Esophagus squamous epithelium (tissue), 5 donors: ENCODE measurements at regions of chr20 and their contacts with region 1.

Region 1: GRCh38 chr20:48657475-48658470 is 170.0 kb downstream of the PREX1 start:
- DNase-seq: no peak
- H3K4me3 ChIP-seq: no peak overlapping the region
- H3K27ac ChIP-seq: no peak overlapping the region
- H3K4me1 ChIP-seq: peaks cover 0 to 24% (median 5%) of the 10 kb centered on the region in 3 donors
- H3K27me3 ChIP-seq: peaks cover 0 to 11% (median 0%) of the 10 kb centered on the region in 4 donors
- CTCF ChIP-seq: peak; percentile 86 to 95 (median 94)
- POLR2A ChIP-seq: no peak

Region 2: GRCh38 chr20:48787861-48788375 is 130.1 kb after region 1 on chr20:
- intact Hi-C with region 1: no loop called
- DNase-seq: no peak
- H3K4me3 ChIP-seq: no peak overlapping the region
- H3K27ac ChIP-seq: peak overlapping the region in 3 of 4 donors; percentile 40 to 76 (median 50)
- H3K4me1 ChIP-seq: peaks cover 4 to 57% (median 12%) of the 10 kb centered on the region in 3 donors
- H3K27me3 ChIP-seq: peaks cover 0 to 51% (median 0%) of the 10 kb centered on the region in 4 donors
- CTCF ChIP-seq: no peak
- POLR2A ChIP-seq: no peak

Region 3: DNA sequence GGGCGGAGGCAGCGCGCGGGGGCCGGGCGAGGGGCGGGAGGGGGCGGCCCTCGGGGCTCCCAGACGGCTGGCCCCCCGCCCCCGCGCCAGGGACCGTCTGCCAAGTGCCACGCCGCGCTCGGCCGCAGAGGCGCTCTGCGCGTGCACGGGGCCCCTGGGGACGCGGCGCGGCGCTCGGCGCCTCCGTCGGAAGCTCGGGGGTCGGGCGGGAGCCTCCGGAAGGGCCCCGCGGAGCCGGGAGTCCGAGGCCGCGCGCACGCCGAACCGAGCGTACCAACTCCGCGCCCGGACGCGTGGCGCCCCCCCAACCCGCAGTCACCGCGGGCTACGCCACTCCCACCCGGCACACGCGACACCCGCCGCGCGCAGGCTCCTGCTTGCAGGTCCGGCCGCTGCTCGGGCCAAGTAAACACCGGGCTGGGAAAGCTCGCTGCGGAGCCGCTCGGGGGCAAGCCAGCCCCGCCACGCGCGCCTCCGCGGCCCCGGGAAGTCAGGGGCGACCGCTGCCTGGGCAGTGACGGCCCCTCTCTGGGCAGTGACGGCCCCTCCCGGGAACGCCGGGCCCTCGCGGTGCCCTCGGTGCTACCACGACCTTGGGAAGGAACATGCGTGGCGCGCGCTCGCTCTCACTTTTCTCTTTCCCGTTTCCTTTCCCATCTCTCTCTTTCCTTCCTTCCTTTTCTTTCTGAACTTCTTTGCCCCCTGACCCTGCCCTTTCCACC is 170.4 kb after region 1 on chr20:
- intact Hi-C with region 1: no loop called
- DNase-seq: no peak
- H3K4me3 ChIP-seq: peak overlapping the region; percentile 33 to 76 (median 60)
- H3K27ac ChIP-seq: peak overlapping the region; percentile 38 to 85 (median 64)
- H3K4me1 ChIP-seq: peaks cover 22 to 76% (median 23%) of the 10 kb centered on the region in 3 donors
- H3K27me3 ChIP-seq: peaks cover 0 to 61% (median 6%) of the 10 kb centered on the region in 4 donors
- CTCF ChIP-seq: peak in 4 of 6 experiments; percentile 14 to 42 (median 38)
- POLR2A ChIP-seq: peak in 2 of 4 donors; percentile 8 to 51

Region 4: GRCh38 chr20:48904365-48905296 is 246.9 kb after region 1 on chr20:
- intact Hi-C with region 1: loop called (anchors 2 kb)
- DNase-seq: no peak
- H3K4me3 ChIP-seq: no peak overlapping the region
- H3K27ac ChIP-seq: no peak overlapping the region
- H3K4me1 ChIP-seq: peaks cover 0 to 11% (median 0%) of the 10 kb centered on the region in 3 donors
- H3K27me3 ChIP-seq: peaks cover 0 to 27% (median 0%) of the 10 kb centered on the region in 4 donors
- CTCF ChIP-seq: peak; percentile 60 to 91 (median 86)
- POLR2A ChIP-seq: no peak